B cell (primary cell): ENCODE measurements at regions of chr2 and their contacts with region 1.

Region 1: GRCh38 chr2:225270861-225271260 is 128.6 kb upstream of the NYAP2 start:
- DNase-seq: peak; percentile 82
- ATAC-seq: peak; percentile 94
- H3K4me3 ChIP-seq: no peak overlapping the region
- H3K4me3 Mint-ChIP-seq: no peak overlapping the region
- H3K27ac ChIP-seq: no peak overlapping the region
- H3K27ac Mint-ChIP-seq: peak overlapping the region; percentile 29
- H3K4me1 ChIP-seq: peaks cover 16 to 22% of the 10 kb centered on the region in 2 donors
- H3K4me1 Mint-ChIP-seq: peaks cover 29% of the 10 kb centered on the region
- H3K27me3 ChIP-seq: no peaks in the 10 kb centered on the region
- H3K27me3 Mint-ChIP-seq: no peaks in the 10 kb centered on the region
- CTCF ChIP-seq: no peak

Region 2: DNA sequence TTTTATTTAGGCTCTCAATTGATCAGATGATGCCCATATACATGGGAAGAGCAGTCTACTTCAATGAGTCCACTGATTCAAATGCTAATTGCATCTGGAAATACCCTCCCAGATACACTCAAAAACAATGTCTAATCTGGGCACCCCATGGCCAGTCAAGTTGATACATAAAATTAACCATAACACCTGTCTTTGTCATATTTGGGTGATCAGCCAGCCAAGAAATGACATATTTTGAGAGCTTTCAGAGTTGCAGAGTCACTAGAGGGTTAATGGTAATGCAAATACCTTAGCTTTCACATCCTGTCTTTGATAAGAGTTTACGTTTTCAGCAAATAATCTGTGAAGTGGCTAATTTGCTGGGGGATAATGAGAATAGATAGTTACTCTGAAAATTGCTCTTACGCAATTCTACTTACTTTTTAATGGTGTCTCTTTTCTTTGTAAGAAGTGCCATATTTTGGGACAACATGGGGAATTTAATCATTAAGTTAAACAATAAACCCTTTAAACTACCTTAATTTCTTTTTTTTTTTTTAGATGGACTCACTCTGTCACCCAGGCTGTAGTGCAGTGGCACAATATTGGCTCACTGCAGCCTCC is 603.8 kb before region 1 on chr2:
- CTCF ChIA-PET with region 1: no interaction called
- POLR2A ChIA-PET with region 1: no interaction called
- intact Hi-C with region 1: no loop called
- DNase-seq: peak; percentile 62
- ATAC-seq: peak; percentile 86
- H3K4me3 ChIP-seq: peak overlapping the region in 1 of 5 experiments; percentile 2
- H3K4me3 Mint-ChIP-seq: peak overlapping the region; percentile 74
- H3K27ac ChIP-seq: no peak overlapping the region
- H3K27ac Mint-ChIP-seq: peak overlapping the region; percentile 76
- H3K4me1 ChIP-seq: peaks cover 11 to 13% of the 10 kb centered on the region in 2 donors
- H3K4me1 Mint-ChIP-seq: peaks cover 22% of the 10 kb centered on the region
- H3K27me3 ChIP-seq: no peaks in the 10 kb centered on the region
- H3K27me3 Mint-ChIP-seq: no peaks in the 10 kb centered on the region
- CTCF ChIP-seq: no peak

Region 3: GRCh38 chr2:224922142-224922727 is 348.6 kb before region 1 on chr2:
- CTCF ChIA-PET with region 1: no interaction called
- POLR2A ChIA-PET with region 1: no interaction called
- intact Hi-C with region 1: loop called (anchors 10 kb)
- DNase-seq: peak; percentile 63
- ATAC-seq: peak; percentile 64
- H3K4me3 ChIP-seq: peak overlapping the region in 1 of 5 experiments; percentile 4
- H3K4me3 Mint-ChIP-seq: peak overlapping the region; percentile 66
- H3K27ac ChIP-seq: peak overlapping the region; percentile 40 to 54
- H3K27ac Mint-ChIP-seq: peak overlapping the region; percentile 84
- H3K4me1 ChIP-seq: peaks cover 64 to 68% of the 10 kb centered on the region in 2 donors
- H3K4me1 Mint-ChIP-seq: peaks cover 55% of the 10 kb centered on the region
- H3K27me3 ChIP-seq: no peaks in the 10 kb centered on the region
- H3K27me3 Mint-ChIP-seq: no peaks in the 10 kb centered on the region
- CTCF ChIP-seq: no peak